Endothelial cell of umbilical vein (primary cell): ENCODE measurements at regions of chr3 and their contacts with region 1.

Region 1: GRCh38 chr3:169772897-169773828 is at the start of gene MYNN:
- DNase-seq: peak; percentile 93
- H3K4me3 ChIP-seq: peak within 1 kb of the TSS; percentile 75 to 94 (median 77)
- H3K27ac ChIP-seq: peak within 1 kb of the TSS; percentile 94
- H3K4me1 ChIP-seq: peaks cover 13% of the 10 kb centered on the region
- H3K27me3 ChIP-seq: no peaks in the 10 kb centered on the region
- CTCF ChIP-seq: peak; percentile 4 to 24
- POLR2A ChIP-seq: peak; percentile 95
- total RNA-seq, gene MYNN: 11.7 and 12.7 TPM in 2 replicates

Region 2: GRCh38 chr3:169478566-169479313 is 294.4 kb before region 1 on chr3:
- CTCF ChIA-PET with region 1: no interaction called
- POLR2A ChIA-PET with region 1: no interaction called
- dilution Hi-C with region 1: no loop called
- intact Hi-C with region 1: no loop called
- DNase-seq: no peak
- H3K4me3 ChIP-seq: no peak overlapping the region
- H3K27ac ChIP-seq: peak overlapping the region; percentile 34
- H3K4me1 ChIP-seq: peaks cover 6% of the 10 kb centered on the region
- H3K27me3 ChIP-seq: no peaks in the 10 kb centered on the region
- CTCF ChIP-seq: no peak
- POLR2A ChIP-seq: no peak

Region 3: GRCh38 chr3:169812332-169813235 is 39.4 kb after region 1 on chr3 and contains the starts of genes LRRC34 and LRRIQ4:
- CTCF ChIA-PET with region 1: no interaction called
- POLR2A ChIA-PET with region 1: interaction called, 3 read pairs
- dilution Hi-C with region 1: no loop called
- intact Hi-C with region 1: loop called (anchors 2 kb)
- DNase-seq: peak; percentile 77
- H3K4me3 ChIP-seq: peak within 1 kb of the TSS; percentile 11 to 48 (median 44)
- H3K27ac ChIP-seq: no peak within 1 kb of the TSS
- H3K4me1 ChIP-seq: peaks cover 15% of the 10 kb centered on the region
- H3K27me3 ChIP-seq: no peaks in the 10 kb centered on the region
- CTCF ChIP-seq: no peak
- POLR2A ChIP-seq: no peak
- total RNA-seq, gene LRRC34: 2.4 and 2.5 TPM in 2 replicates
- total RNA-seq, gene LRRIQ4: not detected in 2 replicates

Region 4: GRCh38 chr3:169818316-169818715 is 45.2 kb after region 1 on chr3:
- CTCF ChIA-PET with region 1: no interaction called
- POLR2A ChIA-PET with region 1: interaction called, 10 read pairs
- dilution Hi-C with region 1: no loop called
- intact Hi-C with region 1: loop called (anchors 2 kb)
- DNase-seq: no peak
- H3K4me3 ChIP-seq: no peak overlapping the region
- H3K27ac ChIP-seq: no peak overlapping the region
- H3K4me1 ChIP-seq: peaks cover 2% of the 10 kb centered on the region
- H3K27me3 ChIP-seq: peaks cover 5 to 8% of the 10 kb centered on the region in 2 experiments
- CTCF ChIP-seq: no peak
- POLR2A ChIP-seq: no peak

Region 5: GRCh38 chr3:169966428-169966950 is 193.3 kb after region 1 on chr3 and contains the start of gene SEC62:
- CTCF ChIA-PET with region 1: no interaction called
- POLR2A ChIA-PET with region 1: no interaction called
- dilution Hi-C with region 1: no loop called
- intact Hi-C with region 1: loop called (anchors 2 kb)
- DNase-seq: peak; percentile 94
- H3K4me3 ChIP-seq: peak within 1 kb of the TSS; percentile 25 to 87 (median 83)
- H3K27ac ChIP-seq: peak within 1 kb of the TSS; percentile 56
- H3K4me1 ChIP-seq: peaks cover 18% of the 10 kb centered on the region
- H3K27me3 ChIP-seq: peaks cover 0 to 8% of the 10 kb centered on the region in 2 experiments
- CTCF ChIP-seq: peak; percentile 20 to 49
- POLR2A ChIP-seq: peak; percentile 72
- total RNA-seq, gene SEC62: 77.8 and 90.8 TPM in 2 replicates

Region 6: DNA sequence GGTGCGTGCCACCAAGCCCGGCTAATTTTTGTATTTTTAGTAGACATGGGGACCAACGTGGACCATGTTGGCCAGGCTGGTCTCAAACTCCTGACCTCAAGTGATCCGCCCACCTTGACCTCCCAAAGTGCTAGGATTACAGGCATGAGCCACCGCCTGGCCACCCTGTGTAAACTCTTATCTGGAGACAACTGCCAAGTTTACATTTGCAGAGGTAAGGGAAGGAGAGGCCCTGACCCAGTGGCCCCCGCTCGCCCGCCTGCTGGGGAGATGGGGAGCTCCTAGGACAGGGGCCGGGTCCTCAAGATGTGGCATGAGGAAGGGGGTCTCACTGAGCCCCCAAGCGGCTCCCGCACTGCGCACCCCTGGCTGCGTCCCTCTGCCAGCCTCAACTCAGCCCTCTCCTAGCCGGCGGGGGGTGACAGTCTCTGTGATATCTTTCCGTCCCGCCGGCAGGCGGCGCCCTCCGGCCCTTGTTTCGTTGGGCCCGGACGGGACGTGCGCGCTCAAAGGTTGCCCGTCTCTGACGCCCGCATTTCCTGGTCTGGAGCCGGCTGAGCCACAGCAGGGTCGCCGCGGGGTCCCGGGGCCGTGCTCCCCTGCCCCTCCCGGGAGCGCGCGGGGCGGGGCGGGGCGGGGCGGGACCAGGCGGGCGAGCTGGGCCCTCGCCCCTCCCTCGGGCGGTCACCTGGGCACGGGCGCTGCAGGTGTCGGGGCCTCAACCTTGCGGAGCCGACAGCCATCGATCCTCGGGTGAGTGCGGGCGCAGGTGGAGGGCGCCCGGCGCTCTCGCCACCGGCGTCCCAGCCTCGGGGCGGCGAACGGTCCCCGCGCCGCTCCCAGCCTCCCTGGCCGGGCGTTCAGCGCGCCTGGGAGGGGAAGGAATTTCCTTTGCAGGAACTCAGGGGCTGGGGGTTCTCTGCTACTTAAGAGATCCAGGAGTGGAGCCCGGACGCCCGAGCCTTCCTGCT is 264.6 kb after region 1 on chr3 and contains the start of gene GPR160:
- CTCF ChIA-PET with region 1: no interaction called
- POLR2A ChIA-PET with region 1: no interaction called
- dilution Hi-C with region 1: no loop called
- intact Hi-C with region 1: loop called (anchors 5 kb)
- DNase-seq: peak; percentile 26
- H3K4me3 ChIP-seq: peak within 1 kb of the TSS; percentile 30 to 43 (median 38)
- H3K27ac ChIP-seq: no peak within 1 kb of the TSS
- H3K4me1 ChIP-seq: peaks cover 5% of the 10 kb centered on the region
- H3K27me3 ChIP-seq: peaks cover 31 to 33% of the 10 kb centered on the region in 2 experiments
- CTCF ChIP-seq: peak; percentile 48 to 79
- POLR2A ChIP-seq: no peak
- total RNA-seq, gene GPR160: 1.1 and 1.3 TPM in 2 replicates